Activated T-helper 1 cell treated with anti-CD3 and anti-CD28 coated beads, Interleukin-12 subunit alpha, Interleukin-12 subunit beta, Interleukin-2, Interleukin-4 antibody, amounts not matched to agents 30 ng/mL and 10 ng/mL and 1 ng/mL, durations not matched to agents 14 hours and 24 hours and 36 hours (primary cell): ENCODE measurements at regions of chr10 and their contacts with region 1.

Region 1: DNA sequence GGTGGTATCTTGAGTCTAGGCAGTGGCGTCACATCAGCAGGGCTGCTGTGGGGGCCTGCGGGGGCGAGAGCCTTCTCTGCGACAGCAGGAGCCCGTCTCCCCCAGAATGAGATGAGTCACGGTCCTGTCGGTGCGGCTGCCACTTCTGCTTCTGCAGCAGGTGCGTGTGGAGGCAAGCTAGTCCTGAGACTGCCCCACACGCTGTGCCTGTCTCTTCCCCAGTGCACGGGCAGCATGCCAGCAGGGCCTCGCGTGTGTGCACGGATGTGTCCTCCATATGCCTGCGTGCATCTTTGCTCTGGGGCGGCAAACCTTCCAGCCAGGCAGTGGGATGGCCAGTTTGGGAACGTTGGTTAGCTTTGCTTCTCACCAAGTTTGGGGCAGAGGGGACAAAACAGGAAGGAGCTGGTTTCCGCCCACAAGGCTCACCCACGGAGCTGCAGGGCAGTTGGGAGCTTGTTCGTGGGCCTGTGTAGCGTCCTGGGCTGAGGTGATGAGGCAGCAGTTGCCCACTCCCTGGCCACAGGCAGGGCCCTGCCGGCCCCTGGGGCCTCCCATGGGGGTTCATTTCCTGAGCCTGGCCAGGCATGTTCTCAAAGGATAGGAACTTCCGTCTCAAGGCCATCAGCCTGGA is 60.8 kb upstream of the PPIF start:
- DNase-seq: peak; percentile 65
- H3K4me3 Mint-ChIP-seq: peak overlapping the region; percentile 71
- H3K27ac Mint-ChIP-seq: peak overlapping the region; percentile 89
- H3K4me1 Mint-ChIP-seq: peaks cover 61% of the 10 kb centered on the region
- H3K27me3 Mint-ChIP-seq: no peaks in the 10 kb centered on the region

Region 2: DNA sequence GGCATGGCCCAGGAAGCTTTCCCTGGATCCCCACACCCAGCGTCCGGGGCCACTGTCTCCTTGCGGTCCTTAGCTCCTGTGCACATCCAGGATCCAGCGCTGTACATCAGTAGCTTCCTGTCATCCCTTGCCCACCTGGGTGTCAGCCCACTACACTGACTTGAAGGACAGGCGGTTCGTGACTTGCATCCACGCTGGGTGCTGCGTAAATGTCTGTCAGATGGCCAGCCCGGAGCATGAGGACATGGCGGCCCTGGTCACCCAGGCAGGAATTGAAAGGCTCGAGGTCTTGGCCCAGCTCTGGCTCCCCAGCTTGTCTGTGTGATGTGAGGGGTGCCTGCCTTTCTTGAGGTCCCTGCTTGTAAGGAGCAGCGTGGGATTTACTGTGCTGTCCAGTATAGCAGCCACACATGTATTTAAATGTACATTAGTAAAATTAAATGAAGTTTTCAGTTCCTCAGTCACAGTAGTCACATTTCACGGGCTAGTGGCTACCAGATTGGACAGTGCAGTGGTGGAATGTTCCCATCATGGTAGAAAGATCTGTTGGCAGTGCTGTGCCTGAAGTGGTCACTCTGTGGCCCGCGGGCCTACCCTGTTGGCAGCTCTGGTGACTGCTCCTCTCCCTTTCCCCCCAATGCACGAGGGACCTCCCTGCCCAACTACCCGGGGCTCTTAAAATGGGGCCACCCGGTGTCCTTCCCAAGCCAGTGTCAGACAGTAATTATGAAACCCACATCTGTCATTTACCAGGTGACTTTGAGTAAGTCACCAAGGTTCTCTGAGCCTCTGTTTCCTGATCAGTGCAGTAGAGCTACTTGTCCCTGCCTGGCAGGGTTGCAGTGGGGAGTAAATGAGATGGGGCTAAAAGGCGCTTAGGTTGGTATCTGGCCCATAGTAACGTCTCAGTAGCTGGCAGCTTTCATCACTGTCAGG is 37.0 kb before region 1 on chr10:
- intact Hi-C with region 1: loop called (anchors 1 kb)
- DNase-seq: peak; percentile 25
- H3K4me3 Mint-ChIP-seq: peak overlapping the region; percentile 51
- H3K27ac Mint-ChIP-seq: peak overlapping the region; percentile 91
- H3K4me1 Mint-ChIP-seq: peaks cover 72% of the 10 kb centered on the region
- H3K27me3 Mint-ChIP-seq: no peaks in the 10 kb centered on the region

Region 3: DNA sequence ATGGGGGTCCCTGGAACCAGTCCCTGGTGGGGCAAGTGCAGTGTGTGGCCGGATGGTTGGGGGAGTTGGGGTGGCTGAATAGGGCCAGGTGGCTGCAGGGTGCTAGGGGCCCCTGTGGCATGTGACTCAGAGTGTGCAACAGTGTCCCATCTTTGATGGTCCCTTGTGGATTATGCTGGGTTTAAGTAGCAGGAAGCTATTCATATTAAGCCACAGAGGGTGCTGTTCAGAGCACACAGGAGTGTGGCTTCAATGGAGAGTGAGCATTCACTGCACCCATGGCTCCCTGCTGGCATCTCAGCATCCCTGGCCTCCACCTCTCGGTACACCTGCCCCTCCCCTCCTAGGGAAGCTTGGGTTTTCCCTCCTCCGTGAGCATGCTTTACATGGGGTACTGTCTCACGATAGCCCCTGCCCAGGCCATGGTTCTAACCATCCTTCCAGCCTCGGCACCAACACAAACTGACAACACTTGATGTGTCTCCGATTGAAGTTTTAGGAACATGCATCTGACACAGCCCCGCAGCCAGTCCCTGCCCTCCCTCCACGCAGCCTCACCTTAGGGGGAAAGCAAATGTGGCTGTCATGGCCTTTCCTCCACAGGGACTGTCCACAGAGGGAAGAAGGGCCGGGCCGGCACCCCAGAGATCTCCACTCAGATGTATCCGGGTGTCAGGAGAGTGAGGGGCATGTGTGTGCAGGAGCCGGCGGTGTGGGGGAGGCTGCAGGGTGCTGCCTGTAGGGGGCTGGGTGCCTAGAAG is 30.4 kb after region 1 on chr10:
- intact Hi-C with region 1: loop called (anchors 1 kb)
- DNase-seq: peak; percentile 34
- H3K4me3 Mint-ChIP-seq: peak overlapping the region; percentile 65
- H3K27ac Mint-ChIP-seq: peak overlapping the region; percentile 95
- H3K4me1 Mint-ChIP-seq: peaks cover 71% of the 10 kb centered on the region
- H3K27me3 Mint-ChIP-seq: no peaks in the 10 kb centered on the region

Region 4: GRCh38 chr10:80177781-80178540 is 891.5 kb after region 1 on chr10:
- intact Hi-C with region 1: no loop called
- DNase-seq: no peak
- H3K4me3 Mint-ChIP-seq: no peak overlapping the region
- H3K27ac Mint-ChIP-seq: peak overlapping the region; percentile 30
- H3K4me1 Mint-ChIP-seq: peaks cover 19% of the 10 kb centered on the region
- H3K27me3 Mint-ChIP-seq: no peaks in the 10 kb centered on the region